ENCODE measurements at regions of chrX and their contacts with region 1.

Region 1: GRCh38 chrX:33128048-33128805 is 83.1 kb downstream of the DMD start:
- DNase-seq: peak; percentile 83
- H3K4me3 ChIP-seq: peak overlapping the region; percentile 65
- H3K27ac ChIP-seq: peak overlapping the region; percentile 98
- H3K4me1 ChIP-seq: peaks cover 43% of the 10 kb centered on the region
- CTCF ChIP-seq: no peak

Region 2: DNA sequence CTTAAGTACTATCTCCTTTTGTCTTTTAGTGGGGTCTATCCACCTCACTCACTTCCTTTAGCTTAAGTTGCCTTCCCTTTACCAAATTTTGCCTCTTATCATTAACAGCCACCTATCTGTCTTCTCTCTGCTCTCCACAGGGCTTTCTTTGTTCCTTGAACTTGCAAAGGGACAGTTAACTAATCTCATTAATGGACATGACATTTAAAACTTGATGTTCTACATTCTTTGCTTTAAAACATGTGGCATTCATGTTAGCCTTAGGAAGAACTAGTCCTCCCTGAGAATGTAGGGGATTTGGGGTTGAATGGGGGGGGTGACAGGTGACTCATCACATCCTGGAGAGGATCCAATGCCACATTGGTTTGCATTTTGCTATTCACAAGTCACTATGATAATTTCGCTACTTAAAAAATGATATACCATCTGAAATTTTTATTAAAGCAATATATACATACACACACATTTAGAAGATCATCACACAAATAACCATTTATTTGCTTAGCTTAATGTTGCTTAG is 124.1 kb after region 1 on chrX:
- CTCF ChIA-PET with region 1: no interaction called
- POLR2A ChIA-PET with region 1: no interaction called
- intact Hi-C with region 1: loop called (anchors 10 kb)
- DNase-seq: peak; percentile 6
- H3K4me3 ChIP-seq: no peak overlapping the region
- H3K27ac ChIP-seq: no peak overlapping the region
- H3K4me1 ChIP-seq: peaks cover 16% of the 10 kb centered on the region
- CTCF ChIP-seq: no peak

Region 3: DNA sequence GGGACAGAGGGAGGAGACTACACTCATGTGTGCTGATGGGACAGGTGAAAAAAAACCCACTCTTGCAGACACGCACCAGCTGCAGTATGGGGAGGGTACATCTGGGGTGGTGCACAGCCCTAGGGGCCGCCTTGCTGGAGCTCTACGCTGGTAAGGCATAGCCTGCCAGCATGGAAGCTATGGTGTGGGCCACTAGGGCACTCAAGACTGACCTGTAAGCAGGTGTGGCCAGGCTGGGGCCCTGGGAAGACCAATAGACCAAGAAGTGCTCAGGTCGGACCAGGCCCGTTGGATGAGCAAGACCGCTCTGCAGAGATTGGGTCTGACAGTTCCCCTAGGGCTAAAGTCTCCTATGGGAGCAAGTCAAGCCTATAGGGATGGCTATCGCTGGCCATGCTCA is 689.0 kb after region 1 on chrX:
- CTCF ChIA-PET with region 1: no interaction called
- POLR2A ChIA-PET with region 1: no interaction called
- intact Hi-C with region 1: no loop called
- DNase-seq: no peak
- H3K4me3 ChIP-seq: no peak overlapping the region
- H3K27ac ChIP-seq: no peak overlapping the region
- H3K4me1 ChIP-seq: no peaks in the 10 kb centered on the region
- CTCF ChIP-seq: no peak